Activated T-helper 1 cell treated with anti-CD3 and anti-CD28 coated beads, Interleukin-12 subunit alpha, Interleukin-12 subunit beta, Interleukin-2, Interleukin-4 antibody, amounts not matched to agents 30 ng/mL and 10 ng/mL and 1 ng/mL, durations not matched to agents 14 hours and 24 hours and 36 hours (primary cell): ENCODE measurements at regions of chr1 and their contacts with region 1.

Region 1: DNA sequence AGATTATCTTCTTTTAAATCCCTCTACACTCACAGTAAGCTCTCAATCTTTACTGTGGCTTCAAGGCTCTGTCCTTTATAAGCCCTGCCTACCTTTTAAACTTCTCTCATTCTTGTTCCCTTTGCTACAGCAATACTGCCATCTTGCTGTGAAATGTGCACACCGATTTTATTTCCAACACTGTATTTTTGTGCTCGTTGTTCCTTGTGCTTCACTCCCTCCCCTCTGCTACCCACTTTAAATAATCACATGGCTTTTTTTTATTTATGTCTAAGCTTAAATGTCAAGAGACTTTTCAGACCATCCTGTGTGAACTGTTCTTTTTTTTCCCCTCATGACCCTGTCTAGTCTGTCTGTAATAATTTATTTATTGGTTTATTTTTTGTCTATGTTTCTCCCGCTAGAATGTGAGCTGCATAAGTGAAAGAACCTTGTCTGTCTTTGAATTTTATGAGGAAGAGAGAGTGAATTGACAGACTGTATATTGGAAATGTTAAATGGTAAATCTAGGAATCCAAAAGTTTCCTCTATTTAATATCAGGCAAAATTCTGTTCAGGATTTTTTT is 45.7 kb downstream of the ABCD3 start:
- DNase-seq: no peak
- H3K4me3 Mint-ChIP-seq: no peak overlapping the region
- H3K27ac Mint-ChIP-seq: no peak overlapping the region
- H3K4me1 Mint-ChIP-seq: no peaks in the 10 kb centered on the region
- H3K27me3 Mint-ChIP-seq: no peaks in the 10 kb centered on the region

Region 2: DNA sequence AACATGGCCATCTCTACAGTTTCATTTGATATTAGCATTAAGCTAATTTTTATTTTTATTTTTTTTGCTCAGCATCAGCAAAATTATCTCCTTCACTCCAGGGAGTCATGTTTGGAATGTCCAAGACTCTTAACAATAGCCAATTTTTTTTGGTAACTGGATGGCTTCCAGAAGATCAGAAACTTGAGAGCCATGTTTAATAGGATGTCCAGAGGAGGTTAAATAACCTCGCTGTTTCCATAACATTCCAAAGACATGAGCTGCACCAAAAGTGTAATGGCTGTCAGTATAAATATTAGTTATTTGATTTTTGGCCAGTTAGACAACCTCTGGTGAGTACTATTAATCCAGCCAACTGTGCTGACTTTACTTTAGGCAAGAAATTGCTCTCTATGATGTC is 665.5 kb before region 1 on chr1:
- intact Hi-C with region 1: no loop called
- DNase-seq: no peak
- H3K4me3 Mint-ChIP-seq: no peak overlapping the region
- H3K27ac Mint-ChIP-seq: no peak overlapping the region
- H3K4me1 Mint-ChIP-seq: no peaks in the 10 kb centered on the region
- H3K27me3 Mint-ChIP-seq: peaks cover 14% of the 10 kb centered on the region

Region 3: DNA sequence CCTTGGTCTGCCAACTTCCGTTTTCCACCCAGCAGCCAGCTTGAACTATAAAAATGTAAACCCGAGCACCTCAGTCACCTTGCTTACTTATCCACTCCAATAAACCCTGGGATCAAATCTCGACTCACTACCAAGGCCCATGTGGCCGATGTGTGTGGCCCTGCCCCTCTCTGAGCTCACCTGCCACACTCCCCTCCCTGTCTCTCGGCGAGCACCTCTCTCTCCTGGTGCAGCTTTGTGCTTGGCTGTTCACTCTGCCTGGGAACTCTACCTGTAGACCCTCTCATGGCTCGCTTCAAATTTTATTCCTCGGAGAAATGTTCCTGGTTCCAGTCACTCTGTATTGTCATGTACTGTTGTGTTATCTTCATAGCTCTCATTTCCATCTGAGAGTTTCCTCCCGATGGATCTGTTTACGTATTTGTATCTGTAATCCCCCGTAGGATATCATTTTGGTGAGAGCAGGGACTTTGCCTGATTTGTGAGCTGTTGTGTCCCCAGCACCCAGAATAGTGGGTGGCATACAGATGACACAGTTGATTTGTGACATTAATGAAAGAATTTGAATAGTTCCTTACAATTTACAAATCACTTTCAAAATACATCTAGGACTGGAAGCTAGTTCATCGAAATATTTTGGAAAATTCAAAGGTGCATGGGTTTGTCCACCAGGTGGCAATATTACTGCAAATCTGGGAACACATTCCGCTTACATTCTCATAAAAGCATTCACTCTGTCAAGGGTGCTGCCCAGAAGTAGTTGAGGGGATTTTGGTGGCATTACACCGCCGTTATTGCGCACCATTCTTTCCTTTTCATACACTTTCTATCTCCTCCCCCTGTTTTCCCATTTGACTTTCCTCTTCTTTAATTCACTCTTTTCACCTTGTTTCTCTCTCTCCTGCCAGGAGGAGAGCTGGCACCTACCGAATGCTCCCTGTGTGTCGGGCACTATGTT is 438.2 kb before region 1 on chr1:
- intact Hi-C with region 1: loop called (anchors 1 kb)
- DNase-seq: no peak
- H3K4me3 Mint-ChIP-seq: no peak overlapping the region
- H3K27ac Mint-ChIP-seq: no peak overlapping the region
- H3K4me1 Mint-ChIP-seq: peaks cover 20% of the 10 kb centered on the region
- H3K27me3 Mint-ChIP-seq: peaks cover 12% of the 10 kb centered on the region

Region 4: DNA sequence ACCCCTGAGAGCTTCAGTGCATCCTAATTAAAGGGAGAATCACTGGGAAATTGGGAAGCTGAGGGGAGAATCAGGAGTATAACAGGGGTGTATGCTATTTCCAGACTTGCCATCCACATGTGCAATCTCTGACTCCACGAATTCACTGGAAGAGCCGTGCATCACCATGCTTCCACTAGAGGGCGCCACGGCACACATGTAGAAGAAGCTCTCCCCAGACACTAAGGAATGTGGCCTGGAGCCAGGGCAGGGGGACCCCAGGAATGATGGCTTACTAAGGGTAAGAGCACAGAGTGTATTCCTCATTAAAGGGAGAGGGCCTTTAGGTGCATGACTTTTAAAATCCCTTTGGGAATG is 424.4 kb before region 1 on chr1:
- intact Hi-C with region 1: loop called (anchors 1 kb)
- DNase-seq: peak; percentile 24
- H3K4me3 Mint-ChIP-seq: no peak overlapping the region
- H3K27ac Mint-ChIP-seq: no peak overlapping the region
- H3K4me1 Mint-ChIP-seq: peaks cover 24% of the 10 kb centered on the region
- H3K27me3 Mint-ChIP-seq: peaks cover 12% of the 10 kb centered on the region

Region 5: DNA sequence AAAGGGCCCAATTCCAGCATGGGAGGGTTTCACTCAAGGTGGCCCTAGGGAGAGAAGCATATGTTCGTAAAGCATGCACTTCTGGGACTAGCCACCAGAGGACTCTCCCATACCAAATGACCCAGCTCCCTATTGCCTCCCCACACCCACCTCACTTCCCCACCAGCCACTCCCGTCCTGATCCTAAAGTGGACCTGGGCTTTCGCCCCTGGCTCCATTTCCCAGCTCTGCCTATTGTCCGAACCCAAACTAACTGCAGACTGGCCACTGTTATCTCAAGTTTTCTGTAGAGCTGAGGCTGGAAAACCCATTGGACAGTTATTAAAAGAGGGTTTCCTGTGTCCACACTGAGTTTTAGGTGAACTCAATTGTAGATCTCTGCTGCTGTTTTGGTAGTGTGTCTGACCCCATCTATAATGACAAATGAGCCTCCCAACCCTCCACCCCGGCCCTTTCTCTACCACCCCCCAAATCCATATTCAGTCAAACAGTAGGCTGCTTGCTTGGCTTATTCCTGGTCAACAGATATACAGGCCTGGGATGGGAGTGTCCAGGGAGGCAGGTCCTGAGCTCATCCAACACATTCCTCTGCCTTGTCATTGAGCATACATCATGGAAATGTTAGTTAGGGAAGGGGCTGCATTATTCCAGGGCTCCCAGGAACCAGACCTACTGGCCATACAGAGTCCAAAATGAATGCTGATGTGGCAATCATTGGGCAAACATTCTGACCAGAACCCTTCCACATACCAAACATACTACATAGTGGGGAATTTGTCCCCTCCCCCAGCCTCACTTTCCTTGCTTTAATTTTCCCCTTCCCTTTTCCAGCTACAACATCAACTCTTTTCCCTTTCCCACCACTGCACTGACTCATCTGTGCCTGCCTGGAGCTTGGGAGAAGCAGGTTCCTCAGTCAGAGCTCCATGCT is 402.1 kb before region 1 on chr1:
- intact Hi-C with region 1: loop called (anchors 1 kb)
- DNase-seq: peak; percentile 5
- H3K4me3 Mint-ChIP-seq: no peak overlapping the region
- H3K27ac Mint-ChIP-seq: no peak overlapping the region
- H3K4me1 Mint-ChIP-seq: no peaks in the 10 kb centered on the region
- H3K27me3 Mint-ChIP-seq: peaks cover 17% of the 10 kb centered on the region

Region 6: DNA sequence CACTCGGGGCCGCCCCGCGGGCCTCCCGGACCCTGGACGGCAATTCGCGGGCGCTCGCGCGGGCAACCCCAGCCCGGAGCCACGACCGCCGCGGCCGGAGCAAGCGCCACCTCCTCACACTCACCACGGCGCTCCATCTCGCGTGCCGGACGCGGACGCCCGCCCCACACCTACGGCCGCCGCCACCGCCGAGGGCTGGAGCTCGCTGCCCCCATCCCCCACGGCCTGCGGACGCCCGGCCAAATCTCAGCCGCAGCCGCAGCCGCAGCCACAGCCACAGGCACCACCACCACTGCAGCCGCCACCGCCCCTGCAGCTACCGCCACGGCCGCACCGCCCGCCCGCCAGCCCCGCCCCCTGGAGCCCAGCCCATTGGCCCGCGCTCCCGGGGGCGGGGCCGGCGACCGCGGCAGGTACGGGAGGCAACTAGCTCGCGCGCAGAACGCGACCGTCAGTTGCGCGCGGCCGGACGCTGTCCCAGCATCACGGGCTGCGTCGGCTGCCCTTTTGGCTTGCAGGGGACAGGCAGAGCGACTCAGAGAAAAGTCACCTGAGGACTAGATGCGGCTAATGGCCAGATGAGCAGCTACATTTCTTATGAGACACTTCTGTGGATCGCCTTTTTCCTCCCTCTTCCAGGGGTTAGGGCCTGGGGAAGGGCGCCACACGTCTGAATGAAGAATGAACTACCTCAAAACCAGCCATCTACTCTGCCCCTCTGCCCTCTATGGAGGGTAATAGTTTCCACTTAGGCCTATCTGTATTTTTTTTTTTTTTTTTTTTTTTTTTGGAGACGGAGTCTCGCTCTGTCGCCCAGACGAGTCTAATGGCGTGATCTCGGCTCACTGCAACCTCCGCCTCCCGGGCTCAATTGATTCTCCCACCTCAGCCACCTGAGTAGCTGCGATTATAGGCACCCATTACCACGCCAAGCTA is 226.3 kb before region 1 on chr1 and contains the start of gene ARHGAP29:
- intact Hi-C with region 1: loop called (anchors 10 kb)
- DNase-seq: peak; percentile 40
- H3K4me3 Mint-ChIP-seq: peak within 1 kb of the TSS; percentile 46
- H3K27ac Mint-ChIP-seq: no peak within 1 kb of the TSS
- H3K4me1 Mint-ChIP-seq: peaks cover 9% of the 10 kb centered on the region
- H3K27me3 Mint-ChIP-seq: peaks cover 65% of the 10 kb centered on the region
- total RNA-seq, gene ARHGAP29: not detected in 2 replicates